Lower leg skin (tissue), 4 donors: ENCODE measurements at regions of chr7 and their contacts with region 1.

Region 1: GRCh38 chr7:69871213-69871885 is 273.1 kb downstream of the AUTS2 start:
- DNase-seq: no peak
- H3K4me3 ChIP-seq: no peak overlapping the region
- CTCF ChIP-seq: no peak
- POLR2A ChIP-seq: no peak

Region 2: DNA sequence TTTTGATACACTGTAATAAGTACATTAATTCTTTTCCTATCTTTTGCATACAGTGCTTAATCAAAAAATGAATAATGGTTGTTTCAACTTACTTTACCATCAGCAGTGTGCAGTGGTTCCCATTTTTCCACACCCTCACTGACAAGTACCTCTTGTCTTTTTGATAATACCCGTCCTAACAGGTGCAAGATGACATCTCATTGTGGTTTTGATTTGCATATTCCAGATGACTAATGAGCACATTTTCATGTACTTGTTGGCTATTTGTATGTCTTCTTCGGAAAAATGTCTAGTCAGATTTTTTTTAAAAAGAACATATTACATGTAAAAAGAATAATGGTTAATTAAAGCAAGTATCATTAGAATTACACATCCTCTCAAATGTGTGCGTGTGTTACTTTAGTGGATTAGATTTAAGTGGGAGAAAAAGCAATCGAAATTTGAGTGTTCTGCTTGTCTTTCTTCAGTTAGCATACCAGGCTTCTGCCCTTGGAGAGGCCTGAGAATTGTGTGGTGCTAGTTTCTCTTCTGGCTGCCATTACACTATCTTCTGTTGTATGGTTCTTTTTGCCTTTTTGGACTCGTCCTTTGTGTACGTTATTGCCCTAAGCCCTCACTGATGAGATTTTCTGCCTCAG is 18.1 kb after region 1 on chr7:
- intact Hi-C with region 1: loop called (anchors 1 kb)
- DNase-seq: no peak
- H3K4me3 ChIP-seq: no peak overlapping the region
- CTCF ChIP-seq: no peak
- POLR2A ChIP-seq: no peak

Region 3: GRCh38 chr7:70334871-70335270 is 463.5 kb after region 1 on chr7:
- intact Hi-C with region 1: no loop called
- DNase-seq: no peak
- H3K4me3 ChIP-seq: no peak overlapping the region
- CTCF ChIP-seq: no peak
- POLR2A ChIP-seq: no peak